ENCODE measurements at regions of chrX and their contacts with region 1.

Region 1: GRCh38 chrX:149539283-149540130 is 1.3 kb upstream of the EOLA1 start:
- H3K4me3 Mint-ChIP-seq: peak overlapping the region; percentile 89
- H3K27ac Mint-ChIP-seq: peak overlapping the region; percentile 100
- H3K4me1 Mint-ChIP-seq: peaks cover 38% of the 10 kb centered on the region
- H3K27me3 Mint-ChIP-seq: no peaks in the 10 kb centered on the region

Region 2: GRCh38 chrX:148681605-148682004 is 857.9 kb before region 1 on chrX:
- intact Hi-C with region 1: no loop called
- H3K4me3 Mint-ChIP-seq: no peak overlapping the region
- H3K27ac Mint-ChIP-seq: no peak overlapping the region
- H3K4me1 Mint-ChIP-seq: no peaks in the 10 kb centered on the region
- H3K27me3 Mint-ChIP-seq: no peaks in the 10 kb centered on the region

Region 3: DNA sequence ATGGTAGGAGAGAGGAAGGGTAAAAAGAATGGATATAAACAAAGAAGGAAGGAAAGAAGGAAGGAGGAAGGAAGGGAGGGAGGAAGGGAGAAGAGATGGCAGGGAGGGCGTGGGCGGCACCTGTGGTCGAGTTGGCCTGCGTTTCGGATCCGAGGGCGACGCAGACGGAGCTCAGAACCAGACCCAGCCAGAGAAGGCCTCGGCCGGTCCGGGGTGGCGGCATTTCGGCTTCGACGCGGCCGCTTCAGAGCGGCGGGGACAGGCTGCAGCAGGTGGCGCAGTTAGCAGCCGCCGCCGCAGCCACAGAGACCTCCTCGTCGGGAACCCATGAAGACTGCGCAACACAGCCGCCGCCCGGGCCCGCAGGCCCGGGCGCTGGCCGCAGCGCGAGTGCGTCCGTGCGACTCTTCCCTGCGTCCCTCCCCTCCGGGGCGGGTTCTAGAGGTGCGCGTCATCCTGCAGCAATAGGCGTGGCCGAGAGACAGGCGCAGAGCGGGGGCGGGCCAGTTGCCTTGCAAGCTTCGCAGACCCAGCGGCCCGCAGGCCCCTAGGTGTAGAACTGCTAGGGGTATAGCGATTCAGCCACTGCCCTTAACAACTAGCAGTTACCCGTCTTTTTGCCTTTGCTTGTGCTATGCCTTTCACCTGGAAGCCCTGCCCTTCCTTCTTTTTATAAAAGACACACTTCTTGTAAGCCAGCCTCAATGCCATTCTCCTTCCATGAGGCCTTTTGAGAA is 34.4 kb before region 1 on chrX and contains the start of gene IDS:
- intact Hi-C with region 1: loop called (anchors 2 kb)
- H3K4me3 Mint-ChIP-seq: peak within 1 kb of the TSS; percentile 89
- H3K27ac Mint-ChIP-seq: peak within 1 kb of the TSS; percentile 97
- H3K4me1 Mint-ChIP-seq: peaks cover 18% of the 10 kb centered on the region
- H3K27me3 Mint-ChIP-seq: peaks cover 7% of the 10 kb centered on the region

Region 4: DNA sequence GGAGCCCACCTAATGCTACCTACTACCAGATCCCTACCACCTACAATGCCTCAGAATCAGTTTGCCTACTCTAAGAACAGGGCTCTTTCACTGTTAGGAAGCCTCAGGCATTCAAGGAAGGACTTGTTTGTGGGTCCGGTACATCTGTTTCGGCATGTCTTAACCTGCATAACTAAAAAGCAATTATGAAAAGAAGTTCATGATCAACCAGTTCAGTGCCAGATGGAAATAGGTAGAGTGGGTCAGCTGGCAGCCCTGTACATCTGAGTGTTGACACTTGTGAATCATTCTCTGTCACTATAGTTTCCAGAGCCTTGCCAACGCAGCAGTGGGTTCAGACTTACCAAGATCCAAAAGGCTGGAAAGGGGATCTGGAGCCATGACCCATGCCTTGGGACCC is 88.8 kb after region 1 on chrX:
- intact Hi-C with region 1: no loop called
- H3K4me3 Mint-ChIP-seq: no peak overlapping the region
- H3K27ac Mint-ChIP-seq: no peak overlapping the region
- H3K4me1 Mint-ChIP-seq: peaks cover 27% of the 10 kb centered on the region
- H3K27me3 Mint-ChIP-seq: peaks cover 5% of the 10 kb centered on the region